ENCODE measurements at regions of chr16 and their contacts with region 1.

Region 1: GRCh38 chr16:2194852-2195321 is 1.5 kb downstream of the CASKIN1 start:
- DNase-seq: peak; percentile 69
- ATAC-seq: peak; percentile 75
- H3K4me3 Mint-ChIP-seq: no peak overlapping the region
- H3K27ac Mint-ChIP-seq: no peak overlapping the region
- H3K4me1 Mint-ChIP-seq: no peaks in the 10 kb centered on the region
- H3K27me3 Mint-ChIP-seq: peaks cover 41% of the 10 kb centered on the region

Region 2: GRCh38 chr16:2205104-2205966 is 10.4 kb after region 1 on chr16 and contains the start of gene MLST8:
- CTCF ChIA-PET with region 1: interaction called, 19 read pairs
- DNase-seq: peak; percentile 90
- ATAC-seq: peak; percentile 83
- H3K4me3 Mint-ChIP-seq: peak within 1 kb of the TSS; percentile 86
- H3K27ac Mint-ChIP-seq: peak within 1 kb of the TSS; percentile 81
- H3K4me1 Mint-ChIP-seq: peaks cover 25% of the 10 kb centered on the region
- H3K27me3 Mint-ChIP-seq: peaks cover 8% of the 10 kb centered on the region
- total RNA-seq, gene MLST8: 38.9 to 45.7 TPM

Region 3: DNA sequence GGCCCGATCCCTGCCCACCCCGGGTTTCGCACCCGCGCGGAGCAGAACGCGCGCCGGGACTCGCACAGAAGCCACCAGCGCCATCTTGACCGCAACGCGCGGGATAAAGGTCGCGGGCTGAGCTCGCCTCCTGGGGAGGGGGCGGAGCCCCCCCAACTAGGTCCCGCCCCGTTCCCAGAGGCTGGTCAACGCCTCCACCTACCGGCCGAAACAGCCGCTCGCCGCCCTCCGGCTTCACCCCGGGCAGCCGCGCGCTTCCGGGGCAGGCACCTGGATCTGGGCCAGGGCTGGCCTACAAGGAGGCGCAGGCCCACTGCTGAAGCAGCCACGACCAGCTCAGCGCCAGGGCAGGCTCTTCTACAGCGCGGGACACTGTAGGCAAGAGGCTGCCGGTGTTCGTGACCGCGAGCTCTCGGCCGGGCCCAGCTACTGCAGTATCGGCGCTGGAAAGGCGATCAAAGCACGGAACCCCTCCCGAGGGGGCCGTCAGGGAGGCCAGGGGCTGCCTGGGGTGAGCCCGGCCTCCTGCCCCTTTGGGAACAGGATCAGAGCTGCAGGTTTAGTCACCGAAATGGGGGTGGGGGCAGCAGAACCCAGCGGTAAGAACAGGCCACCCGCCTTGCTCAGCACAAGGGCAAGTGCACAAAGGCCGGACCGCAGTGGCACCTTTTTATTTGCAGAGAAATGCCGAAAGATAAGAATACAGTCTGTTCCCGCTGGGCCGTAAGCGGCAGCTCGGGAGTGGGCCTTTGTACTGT is 56.8 kb after region 1 on chr16 and contains the start of gene ECI1:
- CTCF ChIA-PET with region 1: interaction called, 11 read pairs
- DNase-seq: peak; percentile 93
- ATAC-seq: peak; percentile 92
- H3K4me3 Mint-ChIP-seq: peak within 1 kb of the TSS; percentile 89
- H3K27ac Mint-ChIP-seq: peak within 1 kb of the TSS; percentile 91
- H3K4me1 Mint-ChIP-seq: peaks cover 11% of the 10 kb centered on the region
- H3K27me3 Mint-ChIP-seq: no peaks in the 10 kb centered on the region
- total RNA-seq, gene ECI1: 48.9 to 57.3 TPM